ENCODE measurements at regions of chr3 and their contacts with region 1.

Region 1: GRCh38 chr3:120245386-120245785 is 39.6 kb downstream of the GPR156 start:
- DNase-seq: no peak
- ATAC-seq: no peak
- H3K4me3 ChIP-seq: no peak overlapping the region
- H3K4me3 Mint-ChIP-seq: no peak overlapping the region
- H3K27ac ChIP-seq: no peak overlapping the region
- H3K27ac Mint-ChIP-seq: no peak overlapping the region
- H3K4me1 ChIP-seq: no peaks in the 10 kb centered on the region
- H3K4me1 Mint-ChIP-seq: no peaks in the 10 kb centered on the region
- H3K27me3 ChIP-seq: peaks cover 0 to 16% of the 10 kb centered on the region in 2 experiments
- H3K27me3 Mint-ChIP-seq: peaks cover 15 to 20% of the 10 kb centered on the region in 2 donors

Region 2: DNA sequence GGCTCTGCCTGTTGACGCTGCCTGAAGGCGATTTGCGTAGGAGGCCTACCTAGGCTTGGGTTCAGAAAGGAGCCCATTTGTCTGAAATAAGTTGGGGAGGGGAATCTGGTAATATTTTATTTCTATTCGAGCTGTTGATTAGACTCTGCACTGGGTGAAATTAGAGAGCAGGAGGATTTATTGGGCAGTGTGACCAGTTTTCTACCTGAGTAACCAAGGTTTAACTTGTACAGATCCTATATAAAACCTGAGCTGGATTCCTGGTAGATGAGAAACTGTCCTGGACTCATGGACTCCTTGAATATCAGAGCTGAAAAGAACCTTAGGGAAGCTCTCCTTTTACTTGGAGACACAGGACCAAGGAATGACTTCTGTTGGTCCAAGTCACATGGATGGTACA is 59.2 kb after region 1 on chr3:
- CTCF ChIA-PET with region 1: no interaction called
- POLR2A ChIA-PET with region 1: interaction called in 1 of 2 experiments, 10 read pairs
- DNase-seq: no peak
- ATAC-seq: no peak
- H3K4me3 ChIP-seq: no peak overlapping the region
- H3K4me3 Mint-ChIP-seq: no peak overlapping the region
- H3K27ac ChIP-seq: no peak overlapping the region
- H3K27ac Mint-ChIP-seq: no peak overlapping the region
- H3K4me1 ChIP-seq: no peaks in the 10 kb centered on the region
- H3K4me1 Mint-ChIP-seq: no peaks in the 10 kb centered on the region
- H3K27me3 ChIP-seq: peaks cover 0 to 6% of the 10 kb centered on the region in 2 experiments
- H3K27me3 Mint-ChIP-seq: peaks cover 0 to 7% of the 10 kb centered on the region in 2 donors

Region 3: DNA sequence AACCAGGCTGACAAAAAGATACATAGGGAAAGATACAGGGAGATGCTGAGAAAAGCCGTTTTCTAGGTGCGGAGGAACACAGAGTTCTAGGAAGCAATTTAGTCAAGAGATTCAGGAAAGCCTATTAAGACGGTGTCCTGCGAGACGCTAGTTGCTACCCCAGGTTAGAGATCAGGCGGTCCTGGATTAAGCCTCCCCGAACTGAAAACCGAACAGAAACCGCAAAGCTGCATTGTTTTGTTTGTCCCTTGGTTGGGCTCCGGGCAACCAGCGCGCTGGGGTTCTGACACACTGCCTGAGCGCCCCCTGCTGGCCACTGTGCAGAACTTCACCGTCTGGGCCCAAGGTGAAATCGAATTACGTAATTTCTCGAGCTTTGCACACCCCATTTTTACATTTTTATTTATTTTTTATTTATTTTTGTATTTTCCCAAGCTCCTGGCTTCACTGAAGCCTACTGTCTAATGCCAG is 313.4 kb after region 1 on chr3:
- CTCF ChIA-PET with region 1: interaction called, 6 to 25 read pairs
- POLR2A ChIA-PET with region 1: no interaction called
- DNase-seq: peak; percentile 72 to 93 (median 86)
- ATAC-seq: peak; percentile 82 to 90 (median 86)
- H3K4me3 ChIP-seq: peak overlapping the region; percentile 48 to 63
- H3K4me3 Mint-ChIP-seq: peak overlapping the region; percentile 70 to 76 (median 74)
- H3K27ac ChIP-seq: no peak overlapping the region
- H3K27ac Mint-ChIP-seq: peak overlapping the region in 1 of 2 donors; percentile 46
- H3K4me1 ChIP-seq: peaks cover 5 to 16% of the 10 kb centered on the region in 2 experiments
- H3K4me1 Mint-ChIP-seq: peaks cover 16 to 25% (median 18%) of the 10 kb centered on the region in 3 donors
- H3K27me3 ChIP-seq: peaks cover 0 to 18% of the 10 kb centered on the region in 2 experiments
- H3K27me3 Mint-ChIP-seq: peaks cover 4 to 11% of the 10 kb centered on the region in 2 donors

Measured in T-cell (primary cell).